CD4-positive, alpha-beta T cell (primary cell): ENCODE measurements at regions of chr6 and their contacts with region 1.

Region 1: DNA sequence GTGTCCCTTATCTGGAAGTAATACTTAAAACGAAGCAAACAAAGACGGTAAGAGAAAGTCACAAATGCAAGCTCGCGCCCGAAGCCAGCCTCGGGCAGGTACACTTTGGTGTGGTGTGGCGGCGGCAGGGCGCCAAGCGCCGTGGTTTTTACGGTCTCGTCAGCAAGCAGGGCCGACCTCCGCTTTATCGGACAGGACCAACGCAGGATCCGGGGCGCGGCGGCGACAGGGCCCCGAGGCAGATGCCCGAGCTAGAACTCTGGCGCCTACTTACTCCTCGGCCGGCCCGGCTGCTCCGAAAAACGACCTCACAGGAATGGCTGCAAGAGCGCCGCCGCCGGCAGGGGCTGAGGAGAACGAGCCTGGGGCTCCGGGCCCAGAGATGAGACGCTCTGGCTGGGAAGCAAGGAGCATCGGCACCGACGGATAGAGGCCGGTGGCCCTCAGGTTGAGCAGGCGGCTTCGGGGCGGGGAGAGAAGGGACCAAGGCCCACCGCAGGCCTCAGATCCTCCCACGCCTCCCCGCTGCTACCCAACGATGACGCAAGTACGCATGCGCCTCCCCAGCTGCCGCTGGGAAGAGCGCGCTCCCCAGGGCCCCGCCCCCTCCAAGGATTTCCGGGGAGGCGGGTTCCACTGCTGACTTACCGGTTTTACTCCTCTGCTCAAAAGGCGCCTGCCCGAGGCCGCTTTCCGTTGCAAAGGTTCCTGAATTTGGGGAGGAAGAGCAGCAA is 60.6 kb downstream of the FAM217A start:
- DNase-seq: peak; percentile 91 to 99 (median 94)
- ATAC-seq: peak; percentile 63
- H3K4me3 ChIP-seq: peak overlapping the region; percentile 92
- H3K4me3 Mint-ChIP-seq: peak overlapping the region; percentile 98
- H3K27ac ChIP-seq: peak overlapping the region; percentile 96
- H3K27ac Mint-ChIP-seq: peak overlapping the region; percentile 96
- H3K4me1 ChIP-seq: peaks cover 48% of the 10 kb centered on the region
- H3K4me1 Mint-ChIP-seq: peaks cover 84% of the 10 kb centered on the region
- H3K27me3 ChIP-seq: no peaks in the 10 kb centered on the region
- H3K27me3 Mint-ChIP-seq: no peaks in the 10 kb centered on the region
- CTCF ChIP-seq: peak; percentile 38

Region 2: GRCh38 chr6:3068329-3069214 is 949.8 kb before region 1 on chr6 and contains the start of gene RIPK1:
- CTCF ChIA-PET with region 1: no interaction called
- POLR2A ChIA-PET with region 1: interaction called, 4 read pairs
- intact Hi-C with region 1: loop called in 1 of 2 experiments (anchors 5 kb)
- DNase-seq: peak; percentile 87 to 97 (median 94)
- ATAC-seq: peak; percentile 73
- H3K4me3 ChIP-seq: peak within 1 kb of the TSS; percentile 84
- H3K4me3 Mint-ChIP-seq: peak within 1 kb of the TSS; percentile 99
- H3K27ac ChIP-seq: peak within 1 kb of the TSS; percentile 88 to 94
- H3K27ac Mint-ChIP-seq: peak within 1 kb of the TSS; percentile 99
- H3K4me1 ChIP-seq: peaks cover 44% of the 10 kb centered on the region
- H3K4me1 Mint-ChIP-seq: peaks cover 74% of the 10 kb centered on the region
- H3K27me3 ChIP-seq: no peaks in the 10 kb centered on the region
- H3K27me3 Mint-ChIP-seq: no peaks in the 10 kb centered on the region
- CTCF ChIP-seq: peak; percentile 40
- total RNA-seq, gene RIPK1: 17.2 to 17.3 TPM

Region 3: DNA sequence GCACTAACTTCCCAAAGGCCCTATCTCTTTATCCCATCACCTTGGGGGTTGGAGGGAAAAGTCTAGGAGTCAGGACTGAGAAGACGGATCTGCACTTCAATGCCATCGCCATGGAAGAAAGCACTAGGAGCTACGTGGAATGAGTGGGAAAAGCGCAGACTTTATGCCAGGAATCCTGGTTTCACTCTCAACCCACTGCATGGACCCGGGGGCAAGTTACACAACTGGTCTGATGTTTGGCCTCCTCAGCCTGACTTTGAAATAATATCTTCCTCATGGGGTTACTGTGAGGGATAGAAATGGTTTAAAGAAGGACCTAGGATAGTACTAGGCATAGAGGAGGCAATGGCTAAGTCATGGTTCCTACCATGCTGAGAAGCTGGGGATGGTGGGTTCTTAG is 773.1 kb before region 1 on chr6:
- CTCF ChIA-PET with region 1: no interaction called
- POLR2A ChIA-PET with region 1: no interaction called
- intact Hi-C with region 1: no loop called
- DNase-seq: no peak
- ATAC-seq: no peak
- H3K4me3 ChIP-seq: no peak overlapping the region
- H3K4me3 Mint-ChIP-seq: no peak overlapping the region
- H3K27ac ChIP-seq: no peak overlapping the region
- H3K27ac Mint-ChIP-seq: no peak overlapping the region
- H3K4me1 ChIP-seq: no peaks in the 10 kb centered on the region
- H3K4me1 Mint-ChIP-seq: no peaks in the 10 kb centered on the region
- H3K27me3 ChIP-seq: peaks cover 11 to 22% of the 10 kb centered on the region in 2 experiments
- H3K27me3 Mint-ChIP-seq: peaks cover 69% of the 10 kb centered on the region
- CTCF ChIP-seq: no peak

Region 4: DNA sequence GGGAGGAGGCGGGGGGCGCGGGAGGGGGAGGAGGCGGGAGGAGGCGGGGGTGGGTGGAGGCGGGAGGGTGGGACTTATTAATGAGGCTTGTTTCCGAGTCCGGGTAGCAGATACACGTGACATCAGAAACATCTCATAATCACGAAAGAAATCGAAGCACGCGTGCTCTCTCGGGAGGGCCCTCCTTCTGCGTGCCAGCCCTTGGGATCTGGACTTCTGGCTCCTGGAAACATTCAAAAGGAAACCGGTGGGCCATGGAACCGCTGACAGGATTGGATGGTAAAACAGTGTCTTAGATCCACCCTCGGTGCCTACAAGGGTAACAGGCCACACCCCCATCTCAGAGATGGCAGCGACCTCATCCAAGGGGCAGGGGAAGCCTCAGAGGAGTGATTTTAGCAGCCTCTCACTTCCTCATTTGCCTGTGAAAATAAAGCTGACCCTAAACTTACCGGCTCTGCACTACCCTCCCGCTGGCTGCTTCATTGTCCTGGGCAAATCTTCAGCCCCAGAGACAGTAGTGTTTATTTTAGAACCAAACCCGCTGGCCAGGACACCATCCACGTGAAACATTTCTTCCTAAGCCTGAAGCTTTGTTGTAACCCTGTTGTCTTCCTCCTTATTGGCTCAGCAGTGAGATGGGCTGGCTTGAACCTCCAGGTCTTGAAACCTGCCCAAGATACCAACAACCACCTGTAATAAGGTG is 662.1 kb before region 1 on chr6:
- CTCF ChIA-PET with region 1: no interaction called
- POLR2A ChIA-PET with region 1: no interaction called
- intact Hi-C with region 1: loop called in 1 of 2 experiments (anchors 5 kb)
- DNase-seq: peak; percentile 36 to 87 (median 58)
- ATAC-seq: peak; percentile 78
- H3K4me3 ChIP-seq: peak overlapping the region; percentile 50
- H3K4me3 Mint-ChIP-seq: peak overlapping the region; percentile 85
- H3K27ac ChIP-seq: peak overlapping the region; percentile 67 to 71
- H3K27ac Mint-ChIP-seq: peak overlapping the region; percentile 94
- H3K4me1 ChIP-seq: peaks cover 33% of the 10 kb centered on the region
- H3K4me1 Mint-ChIP-seq: peaks cover 47% of the 10 kb centered on the region
- H3K27me3 ChIP-seq: no peaks in the 10 kb centered on the region
- H3K27me3 Mint-ChIP-seq: no peaks in the 10 kb centered on the region
- CTCF ChIP-seq: no peak

Region 5: GRCh38 chr6:3977875-3978711 is 40.2 kb before region 1 on chr6:
- CTCF ChIA-PET with region 1: interaction called, 3 read pairs
- POLR2A ChIA-PET with region 1: interaction called, 14 read pairs
- intact Hi-C with region 1: no loop called
- DNase-seq: peak; percentile 6 to 84 (median 31)
- ATAC-seq: peak; percentile 100
- H3K4me3 ChIP-seq: no peak overlapping the region
- H3K4me3 Mint-ChIP-seq: no peak overlapping the region
- H3K27ac ChIP-seq: no peak overlapping the region
- H3K27ac Mint-ChIP-seq: no peak overlapping the region
- H3K4me1 ChIP-seq: peaks cover 8% of the 10 kb centered on the region
- H3K4me1 Mint-ChIP-seq: peaks cover 17% of the 10 kb centered on the region
- H3K27me3 ChIP-seq: no peaks in the 10 kb centered on the region
- H3K27me3 Mint-ChIP-seq: no peaks in the 10 kb centered on the region
- CTCF ChIP-seq: peak; percentile 73

Region 6: DNA sequence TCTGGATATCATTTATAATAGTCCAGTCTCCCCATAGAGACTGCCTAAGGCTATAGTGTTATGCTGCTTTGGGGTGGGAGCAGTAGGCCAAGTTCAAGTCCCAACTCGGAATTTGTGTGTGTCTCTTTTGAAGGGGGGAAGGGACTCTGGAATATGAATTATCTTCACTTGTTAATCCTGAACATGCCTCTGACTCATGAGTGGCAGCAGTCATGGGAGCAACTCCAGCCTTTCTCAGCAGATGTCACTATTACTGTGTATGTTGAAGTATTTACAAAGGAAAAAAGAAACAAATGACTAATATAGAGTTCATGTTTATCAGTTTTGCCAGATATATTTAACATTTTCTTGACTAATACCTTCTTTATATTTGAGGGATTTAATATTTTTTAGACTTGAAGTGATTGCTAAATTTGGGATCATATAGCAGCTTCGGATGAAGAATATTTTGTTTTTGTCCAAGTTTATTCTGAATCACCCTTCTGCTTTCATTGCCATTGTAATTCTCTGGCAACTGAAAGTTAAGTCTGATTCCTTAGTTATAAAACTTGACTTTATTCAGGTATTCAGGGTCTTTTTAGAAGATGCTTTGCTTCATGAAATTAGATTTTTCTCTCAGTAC is 37.2 kb after region 1 on chr6:
- CTCF ChIA-PET with region 1: interaction called, 15 read pairs
- POLR2A ChIA-PET with region 1: interaction called, 7 read pairs
- intact Hi-C with region 1: loop called in 1 of 2 experiments (anchors 5 kb)
- DNase-seq: peak in 4 of 14 experiments; percentile 11 to 28 (median 28)
- ATAC-seq: no peak
- H3K4me3 ChIP-seq: no peak overlapping the region
- H3K4me3 Mint-ChIP-seq: no peak overlapping the region
- H3K27ac ChIP-seq: no peak overlapping the region
- H3K27ac Mint-ChIP-seq: no peak overlapping the region
- H3K4me1 ChIP-seq: peaks cover 5% of the 10 kb centered on the region
- H3K4me1 Mint-ChIP-seq: peaks cover 31% of the 10 kb centered on the region
- H3K27me3 ChIP-seq: no peaks in the 10 kb centered on the region
- H3K27me3 Mint-ChIP-seq: no peaks in the 10 kb centered on the region
- CTCF ChIP-seq: no peak

Region 7: DNA sequence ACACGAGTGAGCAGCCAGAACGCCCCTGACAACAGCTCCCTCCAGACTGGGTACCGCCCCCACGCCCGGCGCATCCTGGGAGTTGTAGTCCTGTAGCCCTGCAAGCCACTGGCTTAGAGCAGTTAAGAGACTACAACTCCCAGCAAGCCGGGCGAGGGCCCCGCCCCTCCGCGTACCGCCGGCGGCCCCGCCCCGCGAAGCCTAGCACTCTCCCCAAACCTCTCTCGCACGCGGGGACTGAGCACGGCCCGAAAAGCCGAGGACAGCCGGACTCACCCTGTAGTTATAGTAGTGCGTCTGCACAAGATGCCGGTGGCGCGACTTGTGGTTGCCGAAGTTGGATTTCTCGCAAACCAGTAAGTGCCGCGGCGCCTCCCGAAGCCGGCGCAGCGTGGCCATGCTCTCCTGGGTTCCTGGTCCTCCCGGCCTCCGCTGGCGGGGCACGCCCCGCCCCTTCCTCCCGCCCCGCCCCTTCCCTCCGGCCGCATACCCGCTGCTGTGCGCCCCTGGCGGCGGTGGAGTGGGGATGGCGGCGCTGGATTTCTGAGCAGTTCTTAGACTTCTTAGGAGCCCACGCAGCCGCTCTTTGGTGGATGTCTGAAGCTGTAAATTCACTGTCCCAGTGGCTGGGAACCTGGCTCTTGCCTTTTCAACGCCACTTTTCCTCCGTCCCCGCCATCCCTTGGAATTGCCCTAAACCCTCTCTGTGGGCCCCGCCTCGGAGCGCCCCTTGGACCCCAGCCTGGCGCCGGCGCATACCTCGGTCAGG is 985.4 kb after region 1 on chr6 and contains the start of gene RPP40:
- CTCF ChIA-PET with region 1: no interaction called
- POLR2A ChIA-PET with region 1: interaction called, 3 read pairs
- intact Hi-C with region 1: loop called in 1 of 2 experiments (anchors 10 kb)
- DNase-seq: peak; percentile 95 to 100 (median 98)
- ATAC-seq: peak; percentile 92
- H3K4me3 ChIP-seq: peak within 1 kb of the TSS; percentile 81
- H3K4me3 Mint-ChIP-seq: peak within 1 kb of the TSS; percentile 90
- H3K27ac ChIP-seq: peak within 1 kb of the TSS; percentile 83
- H3K27ac Mint-ChIP-seq: peak within 1 kb of the TSS; percentile 91
- H3K4me1 ChIP-seq: peaks cover 15% of the 10 kb centered on the region
- H3K4me1 Mint-ChIP-seq: peaks cover 17% of the 10 kb centered on the region
- H3K27me3 ChIP-seq: no peaks in the 10 kb centered on the region
- H3K27me3 Mint-ChIP-seq: no peaks in the 10 kb centered on the region
- CTCF ChIP-seq: peak; percentile 77
- total RNA-seq, gene RPP40: 0.36 to 0.69 TPM